ENCODE measurements at regions of chr1 and their contacts with region 1.

Region 1: DNA sequence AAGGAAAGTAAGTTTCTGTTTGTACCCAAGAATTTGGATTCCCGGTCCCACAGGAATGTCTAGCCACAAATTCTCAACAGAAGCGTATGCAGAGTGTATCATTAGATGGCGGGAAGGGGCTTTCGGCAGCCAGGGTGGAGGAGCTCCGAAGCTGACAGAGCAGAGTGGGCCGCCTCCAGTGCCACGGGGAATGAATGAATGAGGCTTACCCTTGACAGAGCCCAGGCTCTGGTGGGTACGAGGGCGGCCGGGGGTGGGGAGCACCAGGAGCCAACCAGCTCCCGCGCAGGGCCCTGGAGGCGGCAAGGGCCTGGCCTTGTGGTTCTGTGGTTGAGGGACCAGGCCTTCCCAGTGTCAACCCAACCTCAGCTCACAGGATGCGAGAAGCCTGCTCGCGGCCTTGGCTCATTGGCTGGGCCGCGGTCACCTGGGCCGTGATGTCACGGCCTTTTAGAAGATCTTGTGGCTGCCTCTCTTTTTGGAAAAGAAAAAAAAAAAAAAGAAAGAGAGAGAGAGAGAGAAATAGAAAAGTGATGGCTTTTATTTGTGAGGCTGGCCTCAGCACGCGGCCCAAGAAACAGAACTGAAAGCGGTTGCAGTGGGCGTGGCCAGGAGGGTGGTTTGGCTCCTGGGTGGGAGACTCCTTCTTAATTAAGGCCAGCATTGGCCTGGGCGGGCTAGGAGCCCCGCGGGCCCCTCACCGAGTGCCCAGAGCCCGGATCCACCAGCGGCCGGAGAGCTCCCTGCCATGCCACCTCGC is 34.9 kb upstream of the RUNX3 start:
- DNase-seq: peak; percentile 94
- H3K4me3 Mint-ChIP-seq: peak overlapping the region; percentile 94
- H3K27ac Mint-ChIP-seq: peak overlapping the region; percentile 99
- H3K4me1 Mint-ChIP-seq: peaks cover 68% of the 10 kb centered on the region
- H3K27me3 Mint-ChIP-seq: no peaks in the 10 kb centered on the region

Region 2: DNA sequence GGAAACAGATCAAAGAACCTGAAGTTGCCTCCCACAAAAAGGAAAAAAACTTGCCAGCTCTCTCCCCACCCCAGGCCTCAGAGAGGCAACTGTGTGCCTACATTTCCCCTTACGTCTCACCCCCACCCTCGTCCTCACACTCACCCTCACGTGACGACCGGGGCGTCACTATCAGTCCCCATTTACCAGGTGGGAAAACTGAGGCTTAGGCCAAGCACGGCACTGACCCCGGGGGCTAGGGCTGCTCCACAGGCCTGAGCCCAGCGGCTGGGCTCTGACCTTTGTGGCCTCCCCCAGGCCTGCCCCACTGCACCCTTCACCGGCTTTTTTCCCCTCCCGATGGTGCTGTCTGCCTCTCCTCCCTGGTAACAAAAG is 16.6 kb after region 1 on chr1:
- intact Hi-C with region 1: loop called (anchors 2 kb)
- DNase-seq: no peak
- H3K4me3 Mint-ChIP-seq: no peak overlapping the region
- H3K27ac Mint-ChIP-seq: peak overlapping the region; percentile 62
- H3K4me1 Mint-ChIP-seq: peaks cover 75% of the 10 kb centered on the region
- H3K27me3 Mint-ChIP-seq: no peaks in the 10 kb centered on the region

Region 3: DNA sequence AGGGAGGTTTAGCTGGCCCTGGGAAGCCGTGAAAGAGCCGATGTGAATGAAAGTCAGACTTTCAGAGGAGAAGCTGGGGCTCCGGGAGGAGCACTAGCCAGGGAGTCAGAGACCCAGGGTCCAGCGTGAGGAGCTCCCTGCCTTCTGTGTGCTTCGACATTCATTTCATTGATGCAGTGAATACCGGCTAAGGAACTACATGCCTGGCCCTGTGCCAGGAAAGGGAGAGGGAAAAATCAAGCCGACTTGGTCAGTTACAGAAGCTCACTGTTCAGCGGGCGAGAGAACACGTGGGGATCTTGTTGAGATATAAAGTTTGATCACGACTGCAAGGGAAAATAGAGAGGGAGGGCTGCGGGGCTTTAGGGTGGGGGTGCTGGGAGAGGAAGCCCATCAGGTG is 41.8 kb after region 1 on chr1:
- intact Hi-C with region 1: loop called (anchors 1 kb)
- DNase-seq: no peak
- H3K4me3 Mint-ChIP-seq: no peak overlapping the region
- H3K27ac Mint-ChIP-seq: no peak overlapping the region
- H3K4me1 Mint-ChIP-seq: peaks cover 67% of the 10 kb centered on the region
- H3K27me3 Mint-ChIP-seq: no peaks in the 10 kb centered on the region

Region 4: DNA sequence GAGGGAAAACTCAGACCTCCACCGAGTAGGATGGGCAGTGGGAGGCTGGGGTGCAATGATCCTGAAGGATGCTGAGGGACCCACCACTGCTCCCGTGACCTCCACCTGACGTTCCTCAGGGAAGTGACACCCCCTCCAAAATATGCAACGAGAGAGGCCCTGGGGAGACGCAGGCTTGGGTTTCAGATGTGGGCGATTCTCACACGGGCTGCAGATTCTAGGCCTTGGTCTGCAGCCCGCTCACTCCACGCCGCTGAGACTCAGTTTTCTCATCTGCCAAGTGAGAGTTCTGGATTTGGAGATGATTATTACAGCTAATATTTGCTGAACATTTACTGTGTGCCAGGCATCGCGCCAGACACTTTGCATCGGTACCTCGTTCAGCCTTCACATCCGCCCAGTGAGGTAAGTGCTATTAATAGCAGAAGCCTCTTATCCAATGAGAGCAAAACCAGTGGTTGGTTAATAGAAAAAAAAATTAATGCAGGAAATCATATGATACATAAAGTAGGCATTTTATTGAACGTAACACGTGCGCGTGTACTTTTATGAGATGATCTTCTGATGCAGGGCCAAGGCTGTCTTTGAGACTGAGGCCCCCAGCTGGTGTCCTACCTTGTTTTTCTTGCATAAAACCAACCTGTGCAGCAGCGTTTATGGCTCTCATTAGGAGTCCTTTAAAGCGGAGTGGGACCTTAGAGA is 67.1 kb after region 1 on chr1:
- intact Hi-C with region 1: loop called (anchors 1 kb)
- DNase-seq: no peak
- H3K4me3 Mint-ChIP-seq: peak overlapping the region; percentile 74
- H3K27ac Mint-ChIP-seq: peak overlapping the region; percentile 92
- H3K4me1 Mint-ChIP-seq: peaks cover 73% of the 10 kb centered on the region
- H3K27me3 Mint-ChIP-seq: no peaks in the 10 kb centered on the region

Measured in activated T-helper 2 cell treated with anti-CD3 and anti-CD28 coated beads, Interferon-gamma antibody, Interleukin-2, Interleukin-4, amounts not matched to agents 10 μg/mL and 5 μg/mL and 100 μg/mL, durations not matched to agents 14 hours and 24 hours and 36 hours (primary cell).